ENCODE measurements at regions of chr13 and their contacts with region 1.

Region 1: DNA sequence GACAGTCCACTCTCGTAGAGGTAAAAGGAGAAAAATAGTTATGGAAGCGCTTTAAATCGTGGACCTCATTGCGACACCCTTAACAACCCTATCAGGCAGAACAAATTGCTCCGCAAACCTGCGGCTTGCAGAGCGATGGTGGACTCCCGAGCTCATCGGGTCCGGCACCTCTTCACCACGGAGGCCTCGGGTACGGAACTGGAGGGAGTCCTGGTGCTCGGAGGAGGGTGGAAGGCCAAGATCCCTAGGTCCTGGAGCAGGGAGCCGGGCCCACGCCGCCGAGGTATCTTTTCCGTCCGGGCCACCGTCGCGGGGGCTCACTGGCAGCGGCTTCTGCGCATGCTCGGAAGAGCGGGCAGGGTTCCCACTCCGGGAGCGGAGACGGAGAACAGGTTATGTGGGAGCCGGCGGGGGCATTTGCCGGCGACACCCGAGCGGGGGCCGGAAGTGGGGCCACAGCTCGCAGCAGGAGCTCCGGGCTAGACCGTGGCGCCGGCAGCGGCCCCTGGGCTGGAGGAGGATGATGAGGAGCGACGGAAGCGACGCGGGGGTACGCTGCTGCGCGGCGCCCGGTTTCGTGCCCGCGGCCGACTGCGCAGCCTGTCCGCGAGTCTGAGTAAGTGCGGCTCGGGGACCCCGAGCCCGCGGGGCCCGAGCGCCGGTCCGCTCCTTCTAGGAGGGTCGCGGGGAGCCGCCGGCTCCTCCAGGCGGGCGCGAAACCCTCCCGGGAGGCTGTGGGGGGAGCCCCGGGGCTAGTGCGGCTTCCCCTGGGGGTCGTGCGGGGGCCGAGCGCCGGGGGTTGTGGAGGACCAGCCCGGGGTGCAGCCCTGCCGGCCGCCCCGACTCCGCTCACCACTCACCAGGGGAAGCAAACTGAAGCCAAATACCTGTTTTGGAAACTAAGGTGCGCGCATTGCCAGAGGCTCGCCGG is at the start of gene ABHD13:
- DNase-seq: peak; percentile 91 to 96 (median 92)
- H3K4me3 ChIP-seq: peak within 1 kb of the TSS; percentile 68 to 94
- H3K4me3 Mint-ChIP-seq: peak within 1 kb of the TSS; percentile 94 to 99 (median 96)
- H3K27ac ChIP-seq: peak within 1 kb of the TSS; percentile 86
- H3K27ac Mint-ChIP-seq: peak within 1 kb of the TSS; percentile 95 to 99 (median 96)
- H3K4me1 ChIP-seq: peaks cover 69% of the 10 kb centered on the region
- H3K4me1 Mint-ChIP-seq: peaks cover 34 to 76% (median 50%) of the 10 kb centered on the region in 4 donors
- H3K27me3 ChIP-seq: no peaks in the 10 kb centered on the region
- H3K27me3 Mint-ChIP-seq: no peaks in the 10 kb centered on the region
- total RNA-seq, gene ABHD13: 22.9 to 23.2 TPM

Region 2: DNA sequence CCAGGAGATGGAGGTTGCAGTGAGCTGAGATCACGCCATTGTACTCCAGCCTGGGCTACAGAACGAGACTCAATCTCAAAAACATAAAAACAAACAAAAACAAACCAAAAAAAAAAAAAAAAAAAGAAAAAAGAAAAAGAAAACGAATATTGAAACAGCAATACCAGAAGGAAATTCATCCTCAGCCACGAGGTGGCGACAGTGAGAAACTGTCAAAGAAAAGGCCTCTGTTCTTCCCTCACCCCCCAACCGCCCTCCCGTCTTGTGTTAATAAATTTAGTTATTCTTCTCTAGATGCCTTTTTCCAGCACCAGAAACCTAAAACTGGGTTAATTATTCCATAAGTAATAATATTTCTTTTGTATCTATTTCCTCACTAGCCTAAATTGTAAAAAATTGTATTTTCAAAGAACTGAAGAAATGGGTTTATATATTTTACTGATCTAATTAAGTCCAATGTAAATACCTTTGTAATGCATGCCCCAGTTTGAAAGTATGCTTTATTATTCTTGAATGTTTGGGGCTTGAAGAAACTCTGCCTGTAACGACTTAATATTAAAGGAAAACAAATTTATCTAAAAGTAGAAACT is 41.5 kb before region 1 on chr13:
- CTCF ChIA-PET with region 1: interaction called, 8 read pairs
- POLR2A ChIA-PET with region 1: no interaction called
- intact Hi-C with region 1: loop called (anchors 1 kb)
- DNase-seq: peak; percentile 33 to 58 (median 38)
- H3K4me3 ChIP-seq: no peak overlapping the region
- H3K4me3 Mint-ChIP-seq: no peak overlapping the region
- H3K27ac ChIP-seq: no peak overlapping the region
- H3K27ac Mint-ChIP-seq: no peak overlapping the region
- H3K4me1 ChIP-seq: no peaks in the 10 kb centered on the region
- H3K4me1 Mint-ChIP-seq: no peaks in the 10 kb centered on the region
- H3K27me3 ChIP-seq: no peaks in the 10 kb centered on the region
- H3K27me3 Mint-ChIP-seq: peaks cover 0 to 7% of the 10 kb centered on the region in 2 donors

Measured in CD4-positive, alpha-beta memory T cell (primary cell).